Naive thymus-derived CD4-positive, alpha-beta T cell (primary cell): ENCODE measurements at regions of chr10 and their contacts with region 1.

Region 1: GRCh38 chr10:2081501-2081900 is 344.2 kb upstream of the ADARB2 start:
- DNase-seq: no peak
- ATAC-seq: no peak
- H3K4me3 ChIP-seq: no peak overlapping the region
- H3K4me3 Mint-ChIP-seq: no peak overlapping the region
- H3K27ac ChIP-seq: no peak overlapping the region
- H3K27ac Mint-ChIP-seq: no peak overlapping the region
- H3K4me1 ChIP-seq: no peaks in the 10 kb centered on the region
- H3K4me1 Mint-ChIP-seq: no peaks in the 10 kb centered on the region
- H3K27me3 ChIP-seq: no peaks in the 10 kb centered on the region
- H3K27me3 Mint-ChIP-seq: peaks cover 0 to 13% (median 5%) of the 10 kb centered on the region in 5 donors

Region 2: DNA sequence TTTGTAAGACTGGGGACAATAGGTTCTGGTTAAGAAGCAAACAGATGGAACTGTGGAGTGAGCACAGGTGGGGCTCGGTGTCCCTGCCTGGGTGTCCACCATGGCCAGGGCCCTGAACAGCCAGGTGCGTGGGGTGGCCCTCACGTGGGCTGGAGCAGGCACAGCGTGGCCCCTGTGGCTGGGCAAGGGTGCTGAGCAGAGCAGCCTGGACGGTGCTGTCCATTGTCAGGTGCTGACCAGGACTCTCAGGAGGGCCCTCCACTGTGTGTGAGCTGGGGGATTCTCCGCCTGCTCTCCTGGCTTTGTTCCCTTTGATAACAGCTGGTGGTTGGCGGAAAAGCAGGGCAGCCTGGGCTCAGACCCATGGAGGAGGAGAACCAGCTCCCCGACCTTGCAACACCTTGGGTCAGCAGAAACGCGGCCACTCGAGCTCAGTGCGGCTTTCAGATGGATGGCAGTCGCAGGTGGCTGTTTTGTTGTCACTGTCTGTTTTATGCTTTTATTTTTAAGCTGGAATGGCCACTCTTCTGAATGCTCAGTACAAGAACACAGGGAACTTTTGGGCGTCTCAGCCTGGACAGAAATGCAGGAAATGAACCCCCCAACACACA is 70.3 kb before region 1 on chr10:
- CTCF ChIA-PET with region 1: no interaction called
- POLR2A ChIA-PET with region 1: no interaction called
- intact Hi-C with region 1: no loop called
- DNase-seq: no peak
- ATAC-seq: no peak
- H3K4me3 ChIP-seq: no peak overlapping the region
- H3K4me3 Mint-ChIP-seq: no peak overlapping the region
- H3K27ac ChIP-seq: no peak overlapping the region
- H3K27ac Mint-ChIP-seq: no peak overlapping the region
- H3K4me1 ChIP-seq: no peaks in the 10 kb centered on the region
- H3K4me1 Mint-ChIP-seq: peaks cover 0 to 10% (median 0%) of the 10 kb centered on the region in 7 donors
- H3K27me3 ChIP-seq: no peaks in the 10 kb centered on the region
- H3K27me3 Mint-ChIP-seq: peaks cover 0 to 5% (median 0%) of the 10 kb centered on the region in 5 donors

Region 3: DNA sequence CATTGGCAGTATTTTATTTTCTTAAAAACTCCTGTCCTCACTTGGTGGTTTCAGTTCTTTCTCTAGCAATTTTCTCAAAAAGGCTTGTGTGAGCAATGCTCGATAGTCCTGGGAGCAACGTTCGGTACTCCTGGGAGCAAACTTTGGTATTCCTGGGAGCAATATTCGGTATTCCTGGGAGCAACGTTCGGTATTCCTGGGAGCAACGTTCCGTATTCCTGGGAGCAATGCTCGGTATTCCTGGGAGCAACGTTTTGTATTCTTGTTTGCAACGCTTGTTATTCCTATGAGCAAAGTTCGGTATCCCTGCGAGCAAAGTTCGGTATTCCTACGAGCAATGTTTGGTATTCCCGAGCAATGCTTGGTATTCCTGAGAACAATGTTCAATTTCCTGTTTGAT is 17.8 kb after region 1 on chr10:
- CTCF ChIA-PET with region 1: no interaction called
- POLR2A ChIA-PET with region 1: no interaction called
- intact Hi-C with region 1: no loop called
- DNase-seq: no peak
- ATAC-seq: no peak
- H3K4me3 ChIP-seq: no peak overlapping the region
- H3K4me3 Mint-ChIP-seq: no peak overlapping the region
- H3K27ac ChIP-seq: no peak overlapping the region
- H3K27ac Mint-ChIP-seq: no peak overlapping the region
- H3K4me1 ChIP-seq: no peaks in the 10 kb centered on the region
- H3K4me1 Mint-ChIP-seq: no peaks in the 10 kb centered on the region
- H3K27me3 ChIP-seq: no peaks in the 10 kb centered on the region
- H3K27me3 Mint-ChIP-seq: no peaks in the 10 kb centered on the region

Region 4: GRCh38 chr10:2111941-2112340 is 30.4 kb after region 1 on chr10:
- CTCF ChIA-PET with region 1: no interaction called
- POLR2A ChIA-PET with region 1: no interaction called
- intact Hi-C with region 1: loop called in 1 of 2 experiments (anchors 1 kb)
- DNase-seq: no peak
- ATAC-seq: no peak
- H3K4me3 ChIP-seq: no peak overlapping the region
- H3K4me3 Mint-ChIP-seq: no peak overlapping the region
- H3K27ac ChIP-seq: no peak overlapping the region
- H3K27ac Mint-ChIP-seq: no peak overlapping the region
- H3K4me1 ChIP-seq: no peaks in the 10 kb centered on the region
- H3K4me1 Mint-ChIP-seq: no peaks in the 10 kb centered on the region
- H3K27me3 ChIP-seq: no peaks in the 10 kb centered on the region
- H3K27me3 Mint-ChIP-seq: peaks cover 0 to 2% (median 0%) of the 10 kb centered on the region in 5 donors